Caki2 (cell line): ENCODE measurements at regions of chr11 and their contacts with region 1.

Region 1: GRCh38 chr11:69101115-69101791 is 52.5 kb downstream of the TPCN2 start:
- DNase-seq: peak; percentile 67

Region 2: GRCh38 chr11:68810164-68810563 is 291.1 kb before region 1 on chr11:
- in situ Hi-C with region 1: no loop called
- DNase-seq: no peak

Region 3: DNA sequence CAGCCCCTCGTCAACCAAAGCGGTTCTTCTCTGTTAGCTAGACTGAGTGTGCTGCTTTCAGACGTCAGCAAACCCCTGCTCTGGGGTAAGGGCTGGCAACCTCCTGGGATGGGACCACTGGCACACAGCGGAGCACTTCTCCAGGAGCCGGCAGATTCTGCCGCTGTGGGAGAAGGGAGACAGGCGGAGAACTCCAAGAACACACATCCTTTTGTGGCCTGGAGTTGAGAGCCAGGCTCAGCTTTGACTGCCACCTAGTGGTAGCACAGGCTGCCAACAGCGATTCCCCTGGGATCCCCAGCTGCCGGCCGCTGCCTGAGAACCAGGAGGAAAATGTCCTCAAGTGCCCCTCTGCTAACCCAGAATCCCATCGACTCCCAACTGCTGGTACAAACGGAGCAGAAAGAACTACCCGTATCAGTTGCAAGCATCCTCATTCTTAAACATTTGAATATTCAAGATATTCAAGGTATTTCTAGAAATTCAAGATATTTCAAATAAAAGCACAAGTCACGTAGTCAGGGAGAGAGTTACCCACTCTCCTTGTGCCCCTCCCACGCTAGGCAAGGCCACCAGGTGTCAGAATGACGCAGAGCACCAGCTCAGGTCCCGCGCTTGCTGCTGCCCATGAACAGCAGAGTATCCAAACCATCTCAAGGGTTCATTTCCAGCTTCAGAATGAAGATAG is 569.0 kb after region 1 on chr11:
- in situ Hi-C with region 1: loop called (anchors 25 kb)
- DNase-seq: peak; percentile 53